Sigmoid colon (tissue), 7 donors: ENCODE measurements at regions of chr10 and their contacts with region 1.

Region 1: GRCh38 chr10:133124357-133125211 is 35.4 kb upstream of the KNDC1 start:
- DNase-seq: no peak
- H3K4me3 ChIP-seq: no peak overlapping the region
- H3K27ac ChIP-seq: no peak overlapping the region
- H3K4me1 ChIP-seq: no peaks in the 10 kb centered on the region
- H3K27me3 ChIP-seq: peaks cover 0 to 42% (median 32%) of the 10 kb centered on the region in 3 donors
- CTCF ChIP-seq: peak in 3 of 4 experiments; percentile 10 to 51 (median 33)
- EP300 ChIP-seq: no peak
- POLR2A ChIP-seq: no peak

Region 2: GRCh38 chr10:132939957-132940790 is 184.4 kb before region 1 on chr10:
- intact Hi-C with region 1: loop called (anchors 10 kb)
- DNase-seq: no peak
- H3K4me3 ChIP-seq: no peak overlapping the region
- H3K27ac ChIP-seq: no peak overlapping the region
- H3K4me1 ChIP-seq: peaks cover 0 to 18% (median 14%) of the 10 kb centered on the region in 4 donors
- H3K27me3 ChIP-seq: peaks cover 4 to 50% (median 27%) of the 10 kb centered on the region in 3 donors
- CTCF ChIP-seq: peak in 3 of 4 experiments; percentile 25 to 47 (median 44)
- EP300 ChIP-seq: no peak
- POLR2A ChIP-seq: no peak

Region 3: GRCh38 chr10:133226251-133226808 is 101.7 kb after region 1 on chr10:
- intact Hi-C with region 1: no loop called
- DNase-seq: no peak
- H3K4me3 ChIP-seq: no peak overlapping the region
- H3K27ac ChIP-seq: no peak overlapping the region
- H3K4me1 ChIP-seq: peaks cover 0 to 14% (median 8%) of the 10 kb centered on the region in 4 donors
- H3K27me3 ChIP-seq: peaks cover 22 to 64% (median 34%) of the 10 kb centered on the region in 3 donors
- CTCF ChIP-seq: no peak
- EP300 ChIP-seq: no peak
- POLR2A ChIP-seq: no peak